Activated CD4-positive, alpha-beta memory T cell treated with anti-CD3 and anti-CD28 coated beads, Interleukin-2, amount 10 ng/mL, durations not matched to agents 7 days and 5 days (primary cell): ENCODE measurements at regions of chr21 and their contacts with region 1.

Region 1: DNA sequence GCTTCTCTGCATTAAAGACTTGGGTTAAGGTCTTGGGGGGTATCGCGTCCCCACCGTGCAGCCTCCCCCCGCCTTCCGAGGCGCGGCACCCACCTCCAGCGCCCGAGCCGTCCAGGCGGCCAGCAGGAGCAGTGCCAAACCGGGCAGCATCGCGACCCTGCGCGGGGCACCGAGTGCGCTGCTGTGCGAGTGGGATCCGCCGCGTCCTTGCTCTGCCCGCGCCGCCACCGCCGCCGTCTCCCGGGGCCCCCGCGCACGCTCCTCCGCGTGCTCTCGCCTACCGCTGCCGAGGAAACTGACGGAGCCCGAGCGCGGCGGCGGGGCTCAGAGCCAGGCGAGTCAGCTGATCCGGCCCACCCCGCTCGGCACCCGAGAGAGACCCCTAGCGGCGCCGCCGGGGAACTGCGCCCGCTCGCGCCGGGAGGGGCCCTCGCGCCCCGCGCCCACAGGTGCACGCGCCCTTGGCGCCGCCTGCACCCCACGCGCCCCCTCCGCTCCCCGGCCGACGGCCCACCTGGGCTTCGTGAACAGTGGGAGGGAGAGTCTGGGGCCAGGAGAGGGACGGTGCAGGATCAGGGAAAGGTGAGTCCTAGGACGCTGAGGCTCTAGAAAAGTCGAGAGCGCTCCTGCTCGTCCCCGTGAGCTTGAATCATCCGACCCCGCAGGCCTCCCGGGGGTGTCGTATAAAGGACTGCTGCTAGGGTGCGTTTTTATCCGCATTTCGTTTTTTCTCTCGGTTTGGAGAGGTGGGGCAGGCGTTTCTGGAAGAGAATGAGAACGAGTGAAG is at the start of gene APP:
- DNase-seq: peak; percentile 87
- H3K4me3 Mint-ChIP-seq: peak within 1 kb of the TSS; percentile 86
- H3K27ac Mint-ChIP-seq: peak within 1 kb of the TSS; percentile 55
- H3K4me1 Mint-ChIP-seq: peaks cover 25% of the 10 kb centered on the region
- H3K27me3 Mint-ChIP-seq: peaks cover 9% of the 10 kb centered on the region
- total RNA-seq, gene APP: 25.5 to 29.9 TPM

Region 2: GRCh38 chr21:25895565-25896205 is 275.0 kb before region 1 on chr21:
- CTCF ChIA-PET with region 1: interaction called, 18 read pairs
- POLR2A ChIA-PET with region 1: no interaction called
- DNase-seq: no peak
- H3K4me3 Mint-ChIP-seq: no peak overlapping the region
- H3K27ac Mint-ChIP-seq: no peak overlapping the region
- H3K4me1 Mint-ChIP-seq: peaks cover 1% of the 10 kb centered on the region
- H3K27me3 Mint-ChIP-seq: no peaks in the 10 kb centered on the region

Region 3: DNA sequence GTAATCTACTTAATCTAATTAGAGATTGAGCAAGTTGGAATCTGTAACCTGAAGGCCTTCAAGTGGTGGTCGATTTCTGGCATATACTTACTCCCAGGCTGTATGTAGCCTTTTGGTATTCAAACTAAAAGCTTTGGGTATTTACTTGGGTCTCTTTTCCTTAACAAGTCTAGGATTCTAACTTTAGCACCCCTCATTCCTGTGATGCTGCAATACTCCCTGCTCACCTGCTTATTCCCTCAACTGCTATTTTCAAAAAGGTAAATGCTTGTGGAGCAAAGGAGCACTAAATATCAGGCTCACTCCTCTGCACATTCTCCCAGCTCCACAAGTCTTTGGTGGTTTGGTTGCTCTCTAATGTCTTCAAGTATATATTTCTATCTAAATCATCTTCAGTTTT is 470.4 kb after region 1 on chr21:
- CTCF ChIA-PET with region 1: no interaction called
- POLR2A ChIA-PET with region 1: no interaction called
- DNase-seq: no peak
- H3K4me3 Mint-ChIP-seq: no peak overlapping the region
- H3K27ac Mint-ChIP-seq: no peak overlapping the region
- H3K4me1 Mint-ChIP-seq: no peaks in the 10 kb centered on the region
- H3K27me3 Mint-ChIP-seq: no peaks in the 10 kb centered on the region